ENCODE measurements at regions of chr11 and their contacts with region 1.

Region 1: DNA sequence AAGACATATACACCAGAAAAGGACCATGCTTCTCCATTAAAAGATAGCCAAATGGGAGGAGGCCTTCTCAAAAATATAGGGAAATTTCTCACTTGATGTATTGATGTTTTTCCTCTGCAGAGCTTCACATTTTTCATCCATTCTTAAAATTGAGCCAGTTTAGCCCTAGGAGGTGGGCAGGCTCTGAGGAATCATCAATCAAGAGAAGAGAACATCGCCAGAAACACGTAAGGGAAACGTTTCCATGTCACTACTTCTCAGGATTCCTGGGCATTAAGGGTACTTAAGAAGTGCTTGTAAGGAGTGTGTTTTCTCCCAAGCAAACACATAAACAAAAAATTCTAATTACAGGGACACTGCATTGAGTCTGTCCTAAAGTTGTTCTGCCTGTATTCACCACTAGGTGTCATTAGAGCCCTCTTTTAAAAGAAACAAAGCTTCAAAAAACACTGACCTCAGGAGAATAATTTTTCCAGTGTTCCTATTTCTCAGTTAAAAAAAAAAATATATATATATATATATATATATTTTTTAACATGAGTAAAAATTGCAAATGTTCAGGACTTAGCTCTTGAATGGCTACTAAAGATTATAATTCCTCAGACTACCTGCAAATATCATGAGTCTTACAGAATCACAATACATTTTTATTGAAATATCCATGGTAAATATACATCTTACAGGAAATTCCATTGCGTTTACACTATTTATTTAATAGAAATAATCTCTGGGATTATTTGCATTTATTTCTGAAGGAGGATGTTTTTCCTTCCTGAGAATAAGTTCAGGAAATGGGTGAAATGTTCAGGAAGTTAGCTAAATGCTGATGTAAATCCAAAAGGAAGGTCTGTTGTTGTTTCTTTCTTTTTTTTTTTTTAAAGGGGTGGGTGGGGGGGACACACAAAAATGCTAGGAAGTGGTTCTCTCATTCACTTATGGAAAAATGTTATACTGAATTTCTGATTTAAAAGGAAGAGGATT is 16.0 kb downstream of the FZD4 start:
- DNase-seq: peak; percentile 31
- H3K4me3 ChIP-seq: no peak overlapping the region
- H3K27ac ChIP-seq: no peak overlapping the region
- H3K4me1 ChIP-seq: no peaks in the 10 kb centered on the region
- H3K27me3 ChIP-seq: no peaks in the 10 kb centered on the region
- CTCF ChIP-seq: peak; percentile 59 to 60

Region 2: GRCh38 chr11:86978756-86979608 is 39.8 kb after region 1 on chr11:
- CTCF ChIA-PET with region 1: no interaction called
- dilution Hi-C with region 1: no loop called
- in situ Hi-C with region 1: no loop called
- intact Hi-C with region 1: loop called (anchors 1 kb)
- DNase-seq: peak; percentile 36
- H3K4me3 ChIP-seq: no peak overlapping the region
- H3K27ac ChIP-seq: no peak overlapping the region
- H3K4me1 ChIP-seq: peaks cover 6% of the 10 kb centered on the region
- H3K27me3 ChIP-seq: no peaks in the 10 kb centered on the region
- CTCF ChIP-seq: peak; percentile 74 to 80

Region 3: DNA sequence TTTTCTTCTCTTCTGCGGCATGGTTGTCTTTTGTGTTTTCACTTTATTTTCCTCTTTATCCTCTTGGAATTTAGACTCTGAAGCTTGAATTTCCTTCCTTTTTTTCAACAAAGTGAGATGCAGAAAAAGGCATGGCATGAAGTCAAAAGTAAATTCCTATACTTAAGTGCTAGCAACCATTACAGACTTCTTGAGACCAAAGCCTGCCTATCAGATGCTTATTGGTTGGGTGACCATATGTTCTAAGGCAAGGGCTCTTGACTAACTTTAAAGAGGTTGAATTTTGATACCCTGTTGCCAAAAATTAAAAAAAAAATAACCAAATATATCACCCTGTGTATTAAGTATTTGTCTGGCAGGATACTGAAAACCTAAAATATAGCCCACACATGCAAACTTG is 336.0 kb after region 1 on chr11:
- CTCF ChIA-PET with region 1: no interaction called
- dilution Hi-C with region 1: loop called (anchors 25 kb)
- in situ Hi-C with region 1: loop called (anchors 10 kb)
- intact Hi-C with region 1: no loop called
- DNase-seq: no peak
- H3K4me3 ChIP-seq: no peak overlapping the region
- H3K27ac ChIP-seq: no peak overlapping the region
- H3K4me1 ChIP-seq: no peaks in the 10 kb centered on the region
- H3K27me3 ChIP-seq: no peaks in the 10 kb centered on the region
- CTCF ChIP-seq: no peak

Region 4: DNA sequence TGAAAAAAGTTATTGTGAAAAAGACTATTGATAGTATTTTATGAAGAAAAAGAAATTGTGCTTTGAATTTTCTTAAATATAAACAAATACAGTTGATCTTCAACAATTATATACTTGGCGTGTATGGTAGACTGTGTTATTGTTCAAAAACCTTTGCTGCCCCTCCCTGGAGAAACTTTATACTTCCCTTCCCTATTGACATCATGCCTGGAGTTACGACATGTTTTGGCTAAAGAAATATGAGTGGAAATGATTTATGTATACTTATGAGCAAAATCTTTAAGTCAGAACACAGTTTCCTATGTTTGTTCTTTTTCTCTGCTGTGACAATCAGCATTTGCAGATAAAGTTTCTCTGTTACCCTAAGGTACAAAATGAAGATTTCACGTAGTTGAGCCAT is 342.3 kb after region 1 on chr11:
- CTCF ChIA-PET with region 1: no interaction called
- dilution Hi-C with region 1: loop called (anchors 25 kb)
- in situ Hi-C with region 1: loop called (anchors 10 kb)
- intact Hi-C with region 1: no loop called
- DNase-seq: peak; percentile 28
- H3K4me3 ChIP-seq: no peak overlapping the region
- H3K27ac ChIP-seq: no peak overlapping the region
- H3K4me1 ChIP-seq: no peaks in the 10 kb centered on the region
- H3K27me3 ChIP-seq: no peaks in the 10 kb centered on the region
- CTCF ChIP-seq: peak in 1 of 2 donors; percentile 20

Region 5: GRCh38 chr11:87421422-87421821 is 482.2 kb after region 1 on chr11:
- CTCF ChIA-PET with region 1: interaction called, 5 read pairs
- dilution Hi-C with region 1: no loop called
- in situ Hi-C with region 1: no loop called
- intact Hi-C with region 1: loop called (anchors 1 kb)
- DNase-seq: peak; percentile 64
- H3K4me3 ChIP-seq: no peak overlapping the region
- H3K27ac ChIP-seq: no peak overlapping the region
- H3K4me1 ChIP-seq: no peaks in the 10 kb centered on the region
- H3K27me3 ChIP-seq: no peaks in the 10 kb centered on the region
- CTCF ChIP-seq: peak; percentile 62 to 79

Region 6: DNA sequence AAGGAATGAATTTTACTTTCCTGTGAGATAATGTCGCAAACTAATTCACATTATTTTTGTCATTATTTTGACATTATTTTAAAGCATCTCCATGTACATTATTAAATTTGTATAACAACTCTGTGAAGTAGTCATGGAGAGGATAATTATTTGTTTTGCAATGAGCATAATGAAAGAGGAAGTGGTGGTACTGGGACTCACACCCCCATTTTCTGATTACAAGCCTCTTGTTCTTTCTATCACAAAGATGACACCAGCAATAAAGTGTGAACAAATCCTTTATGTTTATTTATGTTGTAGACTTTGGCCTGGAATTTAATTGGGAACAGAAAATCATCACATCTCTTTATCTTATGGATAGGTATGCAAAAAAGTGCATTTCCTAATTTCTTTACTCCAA is 621.2 kb after region 1 on chr11:
- CTCF ChIA-PET with region 1: no interaction called
- dilution Hi-C with region 1: no loop called
- in situ Hi-C with region 1: no loop called
- intact Hi-C with region 1: no loop called
- DNase-seq: no peak
- H3K4me3 ChIP-seq: no peak overlapping the region
- H3K27ac ChIP-seq: no peak overlapping the region
- H3K4me1 ChIP-seq: no peaks in the 10 kb centered on the region
- H3K27me3 ChIP-seq: peaks cover 2% of the 10 kb centered on the region
- CTCF ChIP-seq: no peak